ENCODE measurements at regions of chr6 and their contacts with region 1.

Region 1: GRCh38 chr6:8219352-8219943 is 117.1 kb upstream of the EEF1E1 start:
- DNase-seq: peak; percentile 23
- ATAC-seq: peak; percentile 78
- H3K4me3 ChIP-seq: no peak overlapping the region
- H3K27ac ChIP-seq: no peak overlapping the region
- H3K4me1 ChIP-seq: no peaks in the 10 kb centered on the region
- H3K27me3 ChIP-seq: no peaks in the 10 kb centered on the region
- CTCF ChIP-seq: peak; percentile 68 to 81 (median 69)
- POLR2A ChIP-seq: no peak
- RAD21 ChIP-seq: peak; percentile 77

Region 2: GRCh38 chr6:8102122-8102958 is 117.1 kb before region 1 on chr6 and contains the start of gene EEF1E1:
- CTCF ChIA-PET with region 1: no interaction called
- POLR2A ChIA-PET with region 1: no interaction called
- RAD21 ChIA-PET with region 1: interaction called in 1 of 2 experiments, 11 read pairs
- intact Hi-C with region 1: no loop called
- DNase-seq: peak; percentile 92
- ATAC-seq: peak; percentile 92
- H3K4me3 ChIP-seq: peak within 1 kb of the TSS; percentile 95 to 96
- H3K27ac ChIP-seq: peak within 1 kb of the TSS; percentile 72
- H3K4me1 ChIP-seq: peaks cover 12 to 17% of the 10 kb centered on the region in 2 experiments; a peak in 3 of 4 replicates
- H3K27me3 ChIP-seq: no peaks in the 10 kb centered on the region
- CTCF ChIP-seq: no peak
- POLR2A ChIP-seq: peak; percentile 71
- RAD21 ChIP-seq: 0 out of 2 replicates have a peak, but pooled peaks have one; percentile 10
- total RNA-seq, gene EEF1E1: 69.7 TPM

Region 3: GRCh38 chr6:8131256-8131897 is 88.1 kb before region 1 on chr6:
- CTCF ChIA-PET with region 1: interaction called, 198 read pairs
- POLR2A ChIA-PET with region 1: interaction called, 10 read pairs
- RAD21 ChIA-PET with region 1: interaction called, 19 to 37 read pairs
- intact Hi-C with region 1: loop called (anchors 1 kb)
- DNase-seq: peak; percentile 61
- ATAC-seq: peak; percentile 98
- H3K4me3 ChIP-seq: no peak overlapping the region
- H3K27ac ChIP-seq: no peak overlapping the region
- H3K4me1 ChIP-seq: peaks cover 0 to 2% of the 10 kb centered on the region in 2 experiments; a peak in 1 of 4 replicates
- H3K27me3 ChIP-seq: 0 out of 2 replicates have a peak, but pooled peaks cover 5% of the 10 kb centered on the region
- CTCF ChIP-seq: peak; percentile 47 to 71 (median 69)
- POLR2A ChIP-seq: no peak
- RAD21 ChIP-seq: peak; percentile 92

Region 4: DNA sequence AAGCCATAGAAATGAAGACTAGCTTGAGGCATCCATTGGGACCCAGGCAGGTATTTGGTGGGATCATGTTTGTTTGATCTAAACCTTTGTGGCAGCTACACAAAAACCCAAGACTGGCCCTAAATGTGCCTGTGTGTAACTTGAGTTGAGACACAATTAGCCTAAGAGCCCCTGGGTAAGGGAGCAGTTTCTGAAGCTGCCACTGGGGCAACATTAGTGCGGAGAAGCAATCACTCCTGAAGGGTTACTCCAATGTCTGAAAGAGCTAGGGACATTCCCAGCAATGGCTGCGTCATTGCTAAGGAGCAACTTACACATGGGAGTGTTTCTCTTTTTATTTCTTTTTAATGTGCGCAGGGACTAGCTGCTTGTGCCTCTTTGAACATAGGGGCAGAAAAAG is 49.2 kb before region 1 on chr6:
- CTCF ChIA-PET with region 1: interaction called, 11 read pairs
- POLR2A ChIA-PET with region 1: no interaction called
- RAD21 ChIA-PET with region 1: interaction called, 3 to 4 read pairs
- intact Hi-C with region 1: loop called (anchors 5 kb)
- DNase-seq: no peak
- ATAC-seq: peak; percentile 70
- H3K4me3 ChIP-seq: no peak overlapping the region
- H3K27ac ChIP-seq: no peak overlapping the region
- H3K4me1 ChIP-seq: no peaks in the 10 kb centered on the region; a peak in 1 of 4 replicates
- H3K27me3 ChIP-seq: no peaks in the 10 kb centered on the region
- CTCF ChIP-seq: peak in 1 of 3 experiments; percentile 27; a peak in 3 of 6 replicates
- POLR2A ChIP-seq: no peak
- RAD21 ChIP-seq: no peak

Region 5: DNA sequence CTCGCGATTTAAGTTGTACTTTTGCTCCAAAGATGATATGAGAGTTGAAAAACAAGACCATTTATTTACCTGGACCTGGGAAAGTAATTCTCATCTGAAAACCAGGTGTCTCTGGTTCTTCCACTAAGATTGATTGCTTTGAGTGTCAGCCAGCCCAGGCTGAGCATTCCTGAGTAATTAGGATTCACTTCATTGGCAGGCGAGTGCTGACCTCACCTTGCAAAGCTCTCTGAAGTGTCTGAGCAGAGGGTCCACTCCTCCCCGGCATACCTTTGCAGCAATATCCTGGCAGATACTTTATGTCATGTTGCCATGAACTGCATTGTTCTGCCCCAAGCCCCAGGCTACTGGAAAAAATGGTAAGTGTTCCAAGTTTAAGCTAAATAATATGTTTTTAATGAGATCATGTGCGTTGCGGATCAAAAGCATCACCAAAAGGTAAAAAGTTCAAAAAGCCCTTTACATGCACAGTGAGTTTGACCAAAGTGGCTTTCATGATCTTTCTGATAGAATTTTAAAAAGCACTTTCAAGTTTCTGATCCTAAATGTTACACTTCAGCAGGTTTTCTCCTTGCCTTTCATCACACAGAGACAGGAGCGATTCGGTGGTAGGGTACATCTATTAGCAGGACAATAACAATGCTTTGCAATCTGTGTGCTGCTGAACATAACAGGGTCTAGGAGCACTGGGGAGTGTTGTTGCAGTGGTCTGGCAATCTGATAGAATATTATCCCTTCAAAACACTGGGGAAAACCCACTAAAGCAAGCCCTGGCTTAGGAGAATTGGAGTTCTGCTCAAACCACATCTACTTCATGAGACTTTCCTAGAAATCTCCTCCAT is 10.7 kb after region 1 on chr6:
- CTCF ChIA-PET with region 1: interaction called, 23 read pairs
- POLR2A ChIA-PET with region 1: no interaction called
- RAD21 ChIA-PET with region 1: no interaction called
- intact Hi-C with region 1: no loop called
- DNase-seq: no peak
- ATAC-seq: no peak
- H3K4me3 ChIP-seq: no peak overlapping the region
- H3K27ac ChIP-seq: no peak overlapping the region
- H3K4me1 ChIP-seq: no peaks in the 10 kb centered on the region
- H3K27me3 ChIP-seq: no peaks in the 10 kb centered on the region
- CTCF ChIP-seq: no peak
- POLR2A ChIP-seq: no peak
- RAD21 ChIP-seq: no peak